ENCODE measurements at regions of chr7 and their contacts with region 1.

Region 1: GRCh38 chr7:50206453-50207250 is 97.9 kb upstream of the IKZF1 start:
- DNase-seq: peak; percentile 44 to 89 (median 78)
- ATAC-seq: peak; percentile 70
- H3K4me3 ChIP-seq: peak overlapping the region; percentile 20
- H3K4me3 Mint-ChIP-seq: peak overlapping the region; percentile 72
- H3K27ac ChIP-seq: peak overlapping the region; percentile 49 to 66
- H3K27ac Mint-ChIP-seq: peak overlapping the region; percentile 92
- H3K4me1 ChIP-seq: peaks cover 77% of the 10 kb centered on the region
- H3K4me1 Mint-ChIP-seq: peaks cover 76% of the 10 kb centered on the region
- H3K27me3 ChIP-seq: no peaks in the 10 kb centered on the region
- H3K27me3 Mint-ChIP-seq: no peaks in the 10 kb centered on the region
- CTCF ChIP-seq: no peak

Region 2: GRCh38 chr7:50092579-50093491 is 113.8 kb before region 1 on chr7 and contains the start of gene ZPBP:
- CTCF ChIA-PET with region 1: interaction called, 7 read pairs
- POLR2A ChIA-PET with region 1: interaction called, 12 read pairs
- intact Hi-C with region 1: no loop called
- DNase-seq: peak in 11 of 14 experiments; percentile 25 to 83 (median 44)
- ATAC-seq: peak; percentile 82
- H3K4me3 ChIP-seq: peak within 1 kb of the TSS; percentile 67
- H3K4me3 Mint-ChIP-seq: peak within 1 kb of the TSS; percentile 89
- H3K27ac ChIP-seq: peak within 1 kb of the TSS in 1 of 2 donors; percentile 65
- H3K27ac Mint-ChIP-seq: peak within 1 kb of the TSS; percentile 78
- H3K4me1 ChIP-seq: peaks cover 7% of the 10 kb centered on the region
- H3K4me1 Mint-ChIP-seq: peaks cover 8% of the 10 kb centered on the region
- H3K27me3 ChIP-seq: no peaks in the 10 kb centered on the region
- H3K27me3 Mint-ChIP-seq: no peaks in the 10 kb centered on the region
- CTCF ChIP-seq: peak; percentile 97
- total RNA-seq, gene ZPBP: not detected

Region 3: GRCh38 chr7:50125766-50126165 is 80.9 kb before region 1 on chr7:
- CTCF ChIA-PET with region 1: no interaction called
- POLR2A ChIA-PET with region 1: no interaction called
- intact Hi-C with region 1: no loop called
- DNase-seq: no peak
- ATAC-seq: no peak
- H3K4me3 ChIP-seq: no peak overlapping the region
- H3K4me3 Mint-ChIP-seq: no peak overlapping the region
- H3K27ac ChIP-seq: no peak overlapping the region
- H3K27ac Mint-ChIP-seq: no peak overlapping the region
- H3K4me1 ChIP-seq: no peaks in the 10 kb centered on the region
- H3K4me1 Mint-ChIP-seq: no peaks in the 10 kb centered on the region
- H3K27me3 ChIP-seq: no peaks in the 10 kb centered on the region
- H3K27me3 Mint-ChIP-seq: no peaks in the 10 kb centered on the region
- CTCF ChIP-seq: no peak

Region 4: DNA sequence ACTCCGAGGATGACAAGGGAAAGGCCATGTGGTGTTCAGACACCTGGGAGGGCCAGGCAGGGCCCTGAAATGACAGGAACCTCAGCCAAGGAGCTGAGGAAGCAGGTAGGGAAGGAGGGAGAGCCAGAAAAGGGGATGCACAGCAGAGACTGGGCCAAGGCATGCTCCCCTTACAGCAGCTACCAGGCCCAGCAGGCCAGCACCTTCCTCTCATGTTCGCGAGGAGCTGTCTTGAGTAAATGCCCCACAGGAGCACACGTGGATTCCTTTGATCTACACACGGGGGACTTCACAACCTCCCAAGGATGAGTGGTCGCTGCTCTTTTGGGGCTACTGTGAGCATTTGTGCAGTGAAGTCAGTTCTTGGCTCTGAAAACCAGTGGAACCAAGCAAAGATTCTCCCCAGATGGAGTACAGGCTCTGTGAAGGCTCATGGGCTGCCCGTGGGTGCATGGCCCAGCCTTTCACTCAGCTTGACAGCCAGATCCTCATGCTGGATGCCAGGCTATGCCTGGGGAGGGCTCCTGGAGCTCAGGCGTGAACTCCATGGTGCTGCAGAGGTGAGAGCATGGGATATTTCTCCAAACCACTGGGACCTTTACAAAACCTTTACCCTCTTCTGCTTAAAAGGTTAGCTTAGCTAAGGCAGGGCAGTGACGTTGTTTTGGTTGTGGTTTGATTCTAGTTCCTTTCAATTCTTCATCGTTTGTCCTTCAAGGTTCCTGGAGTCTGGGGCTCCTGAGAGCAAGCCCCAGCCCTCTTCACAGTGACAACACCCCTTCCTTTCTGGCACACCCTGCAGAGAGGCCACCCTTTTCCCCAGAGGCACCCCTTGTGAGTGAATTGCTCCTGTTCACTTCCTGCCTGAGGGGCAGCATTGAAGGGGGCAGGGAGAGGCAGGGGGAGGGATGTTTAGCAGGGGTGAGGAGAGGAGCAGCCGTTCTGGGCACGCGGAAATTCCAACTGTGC is 39.4 kb before region 1 on chr7:
- CTCF ChIA-PET with region 1: no interaction called
- POLR2A ChIA-PET with region 1: no interaction called
- intact Hi-C with region 1: loop called in 1 of 2 experiments (anchors 5 kb)
- DNase-seq: peak in 9 of 14 experiments; percentile 7 to 63 (median 38)
- ATAC-seq: peak; percentile 83
- H3K4me3 ChIP-seq: no peak overlapping the region
- H3K4me3 Mint-ChIP-seq: peak overlapping the region; percentile 36
- H3K27ac ChIP-seq: peak overlapping the region; percentile 14 to 60
- H3K27ac Mint-ChIP-seq: peak overlapping the region; percentile 85
- H3K4me1 ChIP-seq: peaks cover 50% of the 10 kb centered on the region
- H3K4me1 Mint-ChIP-seq: peaks cover 63% of the 10 kb centered on the region
- H3K27me3 ChIP-seq: no peaks in the 10 kb centered on the region
- H3K27me3 Mint-ChIP-seq: no peaks in the 10 kb centered on the region
- CTCF ChIP-seq: no peak

Region 5: DNA sequence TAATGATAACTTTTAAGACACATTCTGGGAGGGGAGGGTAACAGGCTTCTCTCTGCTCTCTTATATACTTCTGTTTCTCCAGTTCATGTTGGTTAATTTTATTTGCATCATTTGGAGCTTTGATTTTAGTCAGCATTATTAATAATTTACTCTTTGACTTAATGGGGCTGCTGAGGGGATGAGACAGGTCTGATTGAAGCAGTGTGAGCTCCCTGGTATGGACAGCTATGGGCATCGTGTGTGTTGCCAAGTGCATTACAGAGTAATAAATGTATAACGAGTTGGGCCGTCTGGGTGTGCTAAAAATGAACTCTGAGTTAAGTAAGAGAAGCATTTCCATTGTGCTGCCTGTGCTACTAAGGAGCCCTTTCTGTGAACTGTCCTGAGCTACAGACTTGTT is 66.2 kb after region 1 on chr7:
- CTCF ChIA-PET with region 1: interaction called, 12 read pairs
- POLR2A ChIA-PET with region 1: interaction called, 38 read pairs
- intact Hi-C with region 1: no loop called
- DNase-seq: no peak
- ATAC-seq: no peak
- H3K4me3 ChIP-seq: no peak overlapping the region
- H3K4me3 Mint-ChIP-seq: no peak overlapping the region
- H3K27ac ChIP-seq: no peak overlapping the region
- H3K27ac Mint-ChIP-seq: peak overlapping the region; percentile 90
- H3K4me1 ChIP-seq: peaks cover 54% of the 10 kb centered on the region
- H3K4me1 Mint-ChIP-seq: peaks cover 84% of the 10 kb centered on the region
- H3K27me3 ChIP-seq: no peaks in the 10 kb centered on the region
- H3K27me3 Mint-ChIP-seq: no peaks in the 10 kb centered on the region
- CTCF ChIP-seq: no peak

Region 6: GRCh38 chr7:50317221-50317678 is 110.6 kb after region 1 on chr7:
- CTCF ChIA-PET with region 1: interaction called, 29 read pairs
- POLR2A ChIA-PET with region 1: interaction called, 271 read pairs
- intact Hi-C with region 1: no loop called
- DNase-seq: peak in 7 of 14 experiments; percentile 46 to 94 (median 75)
- ATAC-seq: peak; percentile 73
- H3K4me3 ChIP-seq: peak overlapping the region; percentile 55
- H3K4me3 Mint-ChIP-seq: peak overlapping the region; percentile 100
- H3K27ac ChIP-seq: peak overlapping the region; percentile 91 to 93
- H3K27ac Mint-ChIP-seq: no peak overlapping the region
- H3K4me1 ChIP-seq: peaks cover 71% of the 10 kb centered on the region
- H3K4me1 Mint-ChIP-seq: peaks cover 98% of the 10 kb centered on the region
- H3K27me3 ChIP-seq: no peaks in the 10 kb centered on the region
- H3K27me3 Mint-ChIP-seq: no peaks in the 10 kb centered on the region
- CTCF ChIP-seq: peak; percentile 29

Region 7: DNA sequence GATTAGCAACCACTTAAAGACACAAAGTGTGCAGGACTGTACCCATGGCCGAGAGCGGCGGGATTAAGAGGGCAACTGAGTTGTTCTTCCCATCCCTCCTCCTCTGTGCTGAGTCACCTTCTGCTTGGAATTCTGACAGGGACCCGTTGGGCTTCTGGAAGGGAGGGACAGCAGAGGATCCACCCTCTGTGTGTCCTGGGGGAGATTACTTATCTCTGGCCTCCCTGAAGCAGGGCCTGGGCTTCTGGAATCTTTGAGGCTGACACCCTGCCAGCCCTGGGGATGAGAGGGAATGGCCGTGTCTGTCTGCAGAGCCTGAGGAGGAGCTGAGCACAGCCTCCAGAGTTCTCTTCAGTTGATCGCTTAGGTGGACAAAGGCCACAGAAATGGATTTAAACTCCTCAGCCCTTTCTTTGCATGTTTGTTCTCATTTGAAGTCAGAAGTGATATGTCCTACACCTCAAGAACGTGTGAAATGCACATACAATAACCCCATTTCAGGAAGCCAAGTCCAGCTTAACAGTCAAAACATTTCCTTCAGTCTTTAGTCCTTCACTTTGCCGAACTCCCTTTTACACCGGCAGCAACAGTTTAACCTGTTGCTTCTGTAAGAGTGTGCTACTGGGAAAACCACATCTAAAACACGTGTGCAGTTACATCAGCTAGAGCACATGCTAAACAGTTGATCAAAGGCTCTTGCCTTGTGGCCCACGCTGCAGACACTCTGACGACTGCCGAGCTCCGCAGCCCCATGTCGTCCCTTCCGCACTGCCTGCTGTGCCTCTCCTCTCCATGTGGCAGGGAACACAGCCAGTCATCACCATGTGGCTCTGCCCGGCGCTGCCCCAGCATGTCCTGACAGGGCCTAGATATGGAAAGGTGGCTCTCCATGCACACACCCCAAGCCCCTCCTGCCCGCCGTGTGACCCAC is 153.6 kb after region 1 on chr7:
- CTCF ChIA-PET with region 1: interaction called, 11 read pairs
- POLR2A ChIA-PET with region 1: interaction called, 137 read pairs
- intact Hi-C with region 1: no loop called
- DNase-seq: peak; percentile 71 to 96 (median 79)
- ATAC-seq: peak; percentile 86
- H3K4me3 ChIP-seq: peak overlapping the region; percentile 17
- H3K4me3 Mint-ChIP-seq: peak overlapping the region; percentile 76
- H3K27ac ChIP-seq: peak overlapping the region; percentile 86 to 96
- H3K27ac Mint-ChIP-seq: no peak overlapping the region
- H3K4me1 ChIP-seq: peaks cover 96% of the 10 kb centered on the region
- H3K4me1 Mint-ChIP-seq: peaks cover 96% of the 10 kb centered on the region
- H3K27me3 ChIP-seq: no peaks in the 10 kb centered on the region
- H3K27me3 Mint-ChIP-seq: no peaks in the 10 kb centered on the region
- CTCF ChIP-seq: no peak

Region 8: DNA sequence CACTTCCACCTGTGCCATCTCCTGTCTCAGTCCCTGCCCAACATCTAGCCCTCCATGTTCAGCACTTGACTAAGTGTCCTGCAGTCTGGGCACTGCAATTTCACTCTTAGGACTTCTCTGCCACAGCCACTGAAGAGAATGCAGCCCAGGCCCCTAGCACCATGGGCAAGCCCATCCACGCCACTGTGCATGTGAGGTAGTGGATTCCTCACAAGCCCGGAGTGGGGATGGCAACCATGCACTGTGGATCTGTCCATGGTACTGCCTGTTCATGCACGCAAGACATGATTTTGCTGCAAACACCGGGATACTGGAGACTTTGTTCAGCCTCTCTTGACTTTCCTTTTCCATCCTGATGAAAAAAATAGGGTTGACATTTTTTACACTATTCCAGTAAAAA is 346.3 kb after region 1 on chr7:
- CTCF ChIA-PET with region 1: no interaction called
- POLR2A ChIA-PET with region 1: no interaction called
- intact Hi-C with region 1: no loop called
- DNase-seq: no peak
- ATAC-seq: no peak
- H3K4me3 ChIP-seq: no peak overlapping the region
- H3K4me3 Mint-ChIP-seq: no peak overlapping the region
- H3K27ac ChIP-seq: no peak overlapping the region
- H3K27ac Mint-ChIP-seq: no peak overlapping the region
- H3K4me1 ChIP-seq: no peaks in the 10 kb centered on the region
- H3K4me1 Mint-ChIP-seq: no peaks in the 10 kb centered on the region
- H3K27me3 ChIP-seq: peaks cover 0 to 7% of the 10 kb centered on the region in 2 experiments
- H3K27me3 Mint-ChIP-seq: peaks cover 47% of the 10 kb centered on the region
- CTCF ChIP-seq: no peak

Region 9: GRCh38 chr7:50679218-50680007 is 472.8 kb after region 1 on chr7:
- CTCF ChIA-PET with region 1: interaction called, 3 read pairs
- POLR2A ChIA-PET with region 1: no interaction called
- intact Hi-C with region 1: loop called in 1 of 2 experiments (anchors 5 kb)
- DNase-seq: peak in 3 of 14 experiments; percentile 69 to 72 (median 71)
- ATAC-seq: peak; percentile 69
- H3K4me3 ChIP-seq: no peak overlapping the region
- H3K4me3 Mint-ChIP-seq: no peak overlapping the region
- H3K27ac ChIP-seq: no peak overlapping the region
- H3K27ac Mint-ChIP-seq: no peak overlapping the region
- H3K4me1 ChIP-seq: no peaks in the 10 kb centered on the region
- H3K4me1 Mint-ChIP-seq: no peaks in the 10 kb centered on the region
- H3K27me3 ChIP-seq: no peaks in the 10 kb centered on the region
- H3K27me3 Mint-ChIP-seq: no peaks in the 10 kb centered on the region
- CTCF ChIP-seq: peak; percentile 79

Region 10: GRCh38 chr7:51188987-51189386 is 982.3 kb after region 1 on chr7:
- CTCF ChIA-PET with region 1: no interaction called
- POLR2A ChIA-PET with region 1: no interaction called
- intact Hi-C with region 1: no loop called
- DNase-seq: no peak
- ATAC-seq: no peak
- H3K4me3 ChIP-seq: no peak overlapping the region
- H3K4me3 Mint-ChIP-seq: no peak overlapping the region
- H3K27ac ChIP-seq: no peak overlapping the region
- H3K27ac Mint-ChIP-seq: no peak overlapping the region
- H3K4me1 ChIP-seq: no peaks in the 10 kb centered on the region
- H3K4me1 Mint-ChIP-seq: no peaks in the 10 kb centered on the region
- H3K27me3 ChIP-seq: no peaks in the 10 kb centered on the region
- H3K27me3 Mint-ChIP-seq: peaks cover under 1% of the 10 kb centered on the region
- CTCF ChIP-seq: no peak

Measured in CD4-positive, alpha-beta T cell (primary cell).